Activated B cell treated with CpG ODN at 0.5 μM for 24 hours (primary cell): ENCODE measurements at regions of chr1 and their contacts with region 1.

Region 1: DNA sequence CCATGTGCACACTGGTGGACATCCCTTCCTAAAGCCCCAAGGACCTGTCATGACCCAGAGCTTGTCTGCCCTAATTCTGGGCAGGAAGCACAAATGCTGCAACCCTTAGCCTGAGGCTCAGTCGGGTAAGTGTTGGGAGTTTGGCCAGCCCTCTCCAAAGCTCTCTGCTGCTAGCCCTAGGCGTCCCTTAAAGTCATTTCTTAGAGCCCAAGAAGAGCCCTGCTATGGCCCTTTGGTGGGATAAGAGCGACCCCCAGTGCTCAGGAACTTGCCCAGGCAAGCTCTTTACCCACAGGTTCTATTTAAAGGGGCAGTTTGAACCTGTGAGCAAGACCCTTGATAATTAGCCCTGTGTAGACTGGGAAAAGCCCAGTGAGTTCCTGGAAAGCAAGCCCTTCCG is 356.8 kb downstream of the RRAGC start:
- DNase-seq: no peak
- ATAC-seq: peak; percentile 73
- H3K4me3 Mint-ChIP-seq: no peak overlapping the region
- H3K27ac Mint-ChIP-seq: no peak overlapping the region
- H3K4me1 Mint-ChIP-seq: peaks cover 18% of the 10 kb centered on the region
- H3K27me3 Mint-ChIP-seq: peaks cover 16% of the 10 kb centered on the region
- CTCF ChIP-seq: no peak

Region 2: DNA sequence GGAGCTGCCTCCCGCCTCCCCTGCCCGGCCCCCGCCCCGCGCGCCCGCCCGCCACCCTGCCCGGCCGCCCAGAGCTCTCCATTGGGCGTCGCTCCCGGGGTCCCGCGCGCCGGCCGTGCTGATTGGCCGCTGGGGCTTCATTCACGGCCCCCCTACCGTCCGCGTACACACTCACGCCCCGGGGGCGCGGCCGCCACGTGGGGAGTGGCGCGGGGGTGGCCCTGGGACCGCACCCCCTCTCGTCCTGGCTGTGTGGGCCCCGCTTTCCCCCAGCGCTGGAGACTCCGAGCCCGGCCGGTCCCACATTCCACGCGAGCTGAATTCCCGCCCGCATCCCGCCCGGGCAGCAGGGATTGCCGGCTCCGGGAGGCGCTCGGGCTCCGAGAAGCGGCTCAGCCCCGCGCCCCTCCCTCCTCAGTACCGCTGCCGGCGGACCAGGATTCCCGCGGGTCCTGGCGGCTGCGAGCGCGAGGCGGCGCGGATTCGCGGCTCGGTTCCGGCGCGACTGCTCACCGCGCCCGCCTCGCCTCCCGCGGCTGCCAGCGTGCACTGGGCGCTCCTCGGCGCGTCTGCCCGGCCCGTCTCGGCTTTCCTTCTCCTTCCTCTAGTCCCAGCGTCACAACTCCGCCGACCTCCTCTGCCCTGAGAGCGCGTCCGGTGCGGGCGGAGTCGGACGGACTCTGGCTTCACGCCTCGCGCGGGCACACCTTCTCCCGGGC is 455.7 kb before region 1 on chr1:
- CTCF ChIA-PET with region 1: no interaction called
- POLR2A ChIA-PET with region 1: no interaction called
- intact Hi-C with region 1: loop called (anchors 5 kb)
- DNase-seq: peak; percentile 78
- ATAC-seq: peak; percentile 86
- H3K4me3 Mint-ChIP-seq: peak overlapping the region; percentile 83
- H3K27ac Mint-ChIP-seq: peak overlapping the region; percentile 18
- H3K4me1 Mint-ChIP-seq: peaks cover 29% of the 10 kb centered on the region
- H3K27me3 Mint-ChIP-seq: peaks cover 21% of the 10 kb centered on the region
- CTCF ChIP-seq: no peak

Region 3: GRCh38 chr1:38256072-38256471 is 246.7 kb before region 1 on chr1:
- CTCF ChIA-PET with region 1: no interaction called
- POLR2A ChIA-PET with region 1: no interaction called
- intact Hi-C with region 1: no loop called
- DNase-seq: no peak
- ATAC-seq: no peak
- H3K4me3 Mint-ChIP-seq: no peak overlapping the region
- H3K27ac Mint-ChIP-seq: no peak overlapping the region
- H3K4me1 Mint-ChIP-seq: no peaks in the 10 kb centered on the region
- H3K27me3 Mint-ChIP-seq: peaks cover 9% of the 10 kb centered on the region
- CTCF ChIP-seq: no peak